ENCODE measurements at regions of chr14 and their contacts with region 1.

Region 1: GRCh38 chr14:93332853-93333630 is at the start of gene BTBD7:
- DNase-seq: peak; percentile 90
- ATAC-seq: peak; percentile 86
- H3K4me3 ChIP-seq: peak within 1 kb of the TSS; percentile 77 to 81 (median 79)
- H3K27ac ChIP-seq: peak within 1 kb of the TSS; percentile 84
- H3K4me1 ChIP-seq: peaks cover 48% of the 10 kb centered on the region
- H3K27me3 ChIP-seq: no peaks in the 10 kb centered on the region; a peak in 1 of 5 replicates
- CTCF ChIP-seq: peak; percentile 9; the same call in 1 of the 2 replicates
- EP300 ChIP-seq: no peak
- POLR2A ChIP-seq: peak in 1 of 2 experiments; percentile 75; a peak in 2 of 4 replicates
- RAD21 ChIP-seq: no peak; the same call in 1 of the 2 replicates
- total RNA-seq, gene BTBD7: 15.2 and 19.9 TPM in 2 replicates

Region 2: GRCh38 chr14:93206793-93207467 is 126.1 kb before region 1 on chr14 and contains the starts of genes GON7 and UBR7:
- CTCF ChIA-PET with region 1: no interaction called
- POLR2A ChIA-PET with region 1: interaction called, 8 read pairs
- in situ Hi-C with region 1: no loop called
- intact Hi-C with region 1: loop called (anchors 5 kb)
- DNase-seq: peak; percentile 96
- ATAC-seq: peak; percentile 96
- H3K4me3 ChIP-seq: peak within 1 kb of the TSS; percentile 77 to 98 (median 92)
- H3K27ac ChIP-seq: peak within 1 kb of the TSS; percentile 87
- H3K4me1 ChIP-seq: peaks cover 29% of the 10 kb centered on the region
- H3K27me3 ChIP-seq: no peaks in the 10 kb centered on the region; a peak in 1 of 5 replicates
- CTCF ChIP-seq: peak; percentile 74
- EP300 ChIP-seq: 0 out of 4 replicates have a peak, but pooled peaks of 1 of the 2 experiments have one; percentile 17
- POLR2A ChIP-seq: peak; percentile 76 to 82
- RAD21 ChIP-seq: peak; percentile 11; the same call in 1 of the 2 replicates
- total RNA-seq, gene GON7: 28.0 and 45.9 TPM in 2 replicates
- total RNA-seq, gene UBR7: 19.7 and 35.5 TPM in 2 replicates

Region 3: GRCh38 chr14:93285044-93285443 is 48.0 kb before region 1 on chr14:
- CTCF ChIA-PET with region 1: no interaction called
- POLR2A ChIA-PET with region 1: no interaction called
- in situ Hi-C with region 1: no loop called
- intact Hi-C with region 1: loop called (anchors 10 kb)
- DNase-seq: no peak
- ATAC-seq: no peak
- H3K4me3 ChIP-seq: no peak overlapping the region
- H3K27ac ChIP-seq: no peak overlapping the region
- H3K4me1 ChIP-seq: peaks cover 24% of the 10 kb centered on the region
- H3K27me3 ChIP-seq: no peaks in the 10 kb centered on the region
- CTCF ChIP-seq: no peak
- EP300 ChIP-seq: no peak
- POLR2A ChIP-seq: no peak
- RAD21 ChIP-seq: no peak

Region 4: GRCh38 chr14:93346929-93347721 is 14.1 kb after region 1 on chr14 and contains the start of gene COX8C:
- CTCF ChIA-PET with region 1: no interaction called
- POLR2A ChIA-PET with region 1: no interaction called
- in situ Hi-C with region 1: no loop called
- intact Hi-C with region 1: no loop called
- DNase-seq: no peak
- ATAC-seq: peak; percentile 32; the same call in 1 of the 3 replicates
- H3K4me3 ChIP-seq: no peak within 1 kb of the TSS
- H3K27ac ChIP-seq: no peak within 1 kb of the TSS
- H3K4me1 ChIP-seq: no peaks in the 10 kb centered on the region
- H3K27me3 ChIP-seq: no peaks in the 10 kb centered on the region
- CTCF ChIP-seq: peak; percentile 48
- EP300 ChIP-seq: no peak
- POLR2A ChIP-seq: no peak
- RAD21 ChIP-seq: no peak
- total RNA-seq, gene COX8C: not detected in 2 replicates

Measured in HepG2 (cell line).